CD8-positive, alpha-beta T cell (primary cell): ENCODE measurements at regions of chr13 and their contacts with region 1.

Region 1: GRCh38 chr13:79328510-79328909 is 77.5 kb downstream of the RBM26 start:
- DNase-seq: no peak
- ATAC-seq: no peak
- H3K4me3 ChIP-seq: no peak overlapping the region
- H3K4me3 Mint-ChIP-seq: no peak overlapping the region
- H3K27ac ChIP-seq: no peak overlapping the region
- H3K27ac Mint-ChIP-seq: peak overlapping the region; percentile 41
- H3K4me1 ChIP-seq: no peaks in the 10 kb centered on the region
- H3K4me1 Mint-ChIP-seq: peaks cover 5% of the 10 kb centered on the region
- H3K27me3 ChIP-seq: no peaks in the 10 kb centered on the region
- H3K27me3 Mint-ChIP-seq: no peaks in the 10 kb centered on the region
- CTCF ChIP-seq: no peak

Region 2: DNA sequence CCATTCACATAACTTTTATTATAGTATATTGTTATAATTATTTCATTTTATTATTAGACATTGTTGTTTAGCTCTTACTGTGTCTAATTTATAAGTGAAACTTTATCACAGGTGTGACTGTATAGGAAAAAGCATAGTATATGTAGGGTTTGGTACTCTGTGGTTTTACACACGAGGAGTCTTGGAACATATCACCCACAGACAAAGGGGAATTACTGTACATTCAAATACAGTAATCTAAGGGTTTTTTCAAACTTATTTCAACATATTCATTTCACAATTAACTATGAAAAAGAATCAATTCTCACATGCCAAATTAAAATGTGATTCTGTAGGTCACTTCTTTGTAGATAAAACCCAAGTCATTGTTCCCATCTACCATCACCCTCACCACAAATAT is 31.6 kb after region 1 on chr13:
- CTCF ChIA-PET with region 1: no interaction called
- POLR2A ChIA-PET with region 1: no interaction called
- intact Hi-C with region 1: loop called in 1 of 2 experiments (anchors 5 kb)
- DNase-seq: no peak
- ATAC-seq: no peak
- H3K4me3 ChIP-seq: no peak overlapping the region
- H3K4me3 Mint-ChIP-seq: no peak overlapping the region
- H3K27ac ChIP-seq: no peak overlapping the region
- H3K27ac Mint-ChIP-seq: no peak overlapping the region
- H3K4me1 ChIP-seq: no peaks in the 10 kb centered on the region
- H3K4me1 Mint-ChIP-seq: peaks cover 12% of the 10 kb centered on the region
- H3K27me3 ChIP-seq: no peaks in the 10 kb centered on the region
- H3K27me3 Mint-ChIP-seq: no peaks in the 10 kb centered on the region
- CTCF ChIP-seq: no peak

Region 3: GRCh38 chr13:79604752-79605151 is 276.2 kb after region 1 on chr13:
- CTCF ChIA-PET with region 1: no interaction called
- POLR2A ChIA-PET with region 1: no interaction called
- intact Hi-C with region 1: no loop called
- DNase-seq: no peak
- ATAC-seq: no peak
- H3K4me3 ChIP-seq: no peak overlapping the region
- H3K4me3 Mint-ChIP-seq: no peak overlapping the region
- H3K27ac ChIP-seq: no peak overlapping the region
- H3K27ac Mint-ChIP-seq: no peak overlapping the region
- H3K4me1 ChIP-seq: no peaks in the 10 kb centered on the region
- H3K4me1 Mint-ChIP-seq: no peaks in the 10 kb centered on the region
- H3K27me3 ChIP-seq: no peaks in the 10 kb centered on the region
- H3K27me3 Mint-ChIP-seq: no peaks in the 10 kb centered on the region
- CTCF ChIP-seq: no peak